GM10248 (cell line): ENCODE measurements at regions of chr3 and their contacts with region 1.

Region 1: GRCh38 chr3:33131331-33132018 is 17.7 kb downstream of the CRTAP start:
- DNase-seq: peak; percentile 76
- CTCF ChIP-seq: peak; percentile 65

Region 2: DNA sequence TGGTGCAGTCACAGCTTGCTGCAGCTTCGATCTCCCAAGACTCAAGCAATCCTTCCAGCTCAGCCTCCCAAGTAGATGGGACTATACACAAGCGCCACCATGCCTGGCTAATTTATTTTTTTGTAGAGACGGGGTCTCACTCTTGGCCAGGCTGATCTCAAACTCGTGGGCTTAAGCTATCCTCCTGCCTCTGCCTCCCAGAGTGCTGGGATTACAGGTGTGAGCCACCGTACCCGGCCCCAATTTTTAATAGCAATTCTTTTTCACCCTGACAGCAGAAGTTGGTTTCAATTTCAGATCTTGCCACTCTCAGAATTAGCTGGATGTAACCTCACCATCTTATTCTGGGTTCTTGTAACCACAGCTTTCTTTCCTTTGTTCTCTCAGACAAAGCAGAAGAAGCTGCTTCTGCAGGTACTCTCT is 248.9 kb before region 1 on chr3:
- CTCF ChIA-PET with region 1: no interaction called
- POLR2A ChIA-PET with region 1: no interaction called
- DNase-seq: peak; percentile 45
- CTCF ChIP-seq: no peak

Region 3: DNA sequence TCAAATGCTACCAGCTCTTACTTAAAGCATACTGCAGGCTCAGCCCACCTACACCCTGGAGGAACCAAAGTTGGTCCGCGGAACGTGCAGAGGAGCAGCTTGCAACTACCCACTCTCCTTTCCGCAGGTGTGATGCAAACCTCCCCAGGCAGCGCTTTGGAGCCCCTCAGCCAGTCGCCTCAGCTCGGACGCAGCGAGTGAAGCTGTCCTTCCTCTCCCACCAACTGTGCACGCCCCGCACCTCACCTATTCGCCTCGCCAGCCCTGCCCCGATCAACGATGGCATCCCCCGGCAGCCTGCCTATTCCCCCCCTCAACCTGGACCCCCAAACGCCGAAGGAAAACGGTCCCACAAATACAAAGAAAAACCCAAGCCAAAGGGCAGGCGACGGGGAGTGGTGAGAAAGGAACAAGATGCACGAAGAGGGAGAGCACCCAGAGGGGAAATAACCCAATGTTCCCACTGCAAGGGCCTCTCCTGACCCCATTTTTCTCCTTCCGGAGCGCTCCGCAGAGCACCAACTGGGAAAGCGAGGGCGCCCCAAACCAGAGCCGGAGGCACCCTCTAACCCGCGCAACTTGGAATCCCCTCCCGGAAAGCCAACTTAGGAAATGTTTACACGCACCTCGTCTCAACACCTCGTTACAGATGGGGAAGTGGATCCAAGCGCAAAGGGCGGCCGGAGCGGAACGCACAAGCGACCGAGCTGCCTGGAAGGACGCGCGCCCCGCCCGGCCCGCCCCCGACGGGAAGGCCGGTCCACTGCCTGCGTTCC is 35.2 kb before region 1 on chr3:
- CTCF ChIA-PET with region 1: interaction called, 14 read pairs
- POLR2A ChIA-PET with region 1: no interaction called
- DNase-seq: peak; percentile 55
- CTCF ChIP-seq: no peak

Region 4: GRCh38 chr3:33144433-33144832 is 13.0 kb after region 1 on chr3:
- CTCF ChIA-PET with region 1: interaction called, 95 read pairs
- POLR2A ChIA-PET with region 1: no interaction called
- DNase-seq: peak; percentile 43
- CTCF ChIP-seq: peak; percentile 49

Region 5: GRCh38 chr3:33209357-33209756 is 77.9 kb after region 1 on chr3:
- CTCF ChIA-PET with region 1: no interaction called
- POLR2A ChIA-PET with region 1: no interaction called
- DNase-seq: no peak
- CTCF ChIP-seq: no peak

Region 6: DNA sequence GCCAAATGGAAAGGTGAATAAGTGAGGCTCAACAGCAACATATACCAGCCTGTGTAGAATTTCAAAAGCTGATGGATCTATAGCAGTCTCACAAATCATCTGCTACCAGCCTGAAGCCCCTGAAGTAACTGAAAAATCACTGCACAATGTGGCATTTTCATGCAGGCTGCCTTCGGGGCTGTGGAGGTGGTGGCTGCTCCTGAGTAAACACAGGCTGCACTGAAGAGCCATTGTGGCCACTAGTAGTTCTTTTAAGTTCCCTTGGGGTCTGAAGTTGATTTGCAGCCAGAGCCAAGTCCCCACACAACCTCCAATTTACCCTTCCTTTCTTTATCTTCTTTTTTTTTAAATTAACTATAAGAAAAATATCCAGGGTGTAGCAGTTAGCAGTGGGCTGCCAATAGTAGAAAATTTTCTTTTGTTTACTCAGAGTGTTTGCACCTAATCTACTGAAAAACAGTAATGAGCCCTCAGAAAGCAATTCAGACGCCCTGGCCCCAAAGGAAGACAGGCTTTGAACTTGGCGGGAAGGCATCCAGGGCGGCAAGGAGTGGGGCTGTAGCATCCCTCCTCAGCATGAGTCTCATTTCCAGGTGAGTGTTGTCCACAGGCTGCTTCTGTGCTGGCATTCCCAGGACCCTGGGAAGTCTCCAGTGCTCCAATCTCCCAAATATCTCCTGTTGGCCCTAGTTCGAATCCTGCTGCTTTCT is 100.4 kb after region 1 on chr3:
- CTCF ChIA-PET with region 1: no interaction called
- POLR2A ChIA-PET with region 1: no interaction called
- DNase-seq: no peak
- CTCF ChIP-seq: no peak

Region 7: GRCh38 chr3:33372218-33373081 is 241.0 kb after region 1 on chr3:
- CTCF ChIA-PET with region 1: interaction called, 108 read pairs
- POLR2A ChIA-PET with region 1: no interaction called
- DNase-seq: peak; percentile 56
- CTCF ChIP-seq: peak; percentile 85

Region 8: DNA sequence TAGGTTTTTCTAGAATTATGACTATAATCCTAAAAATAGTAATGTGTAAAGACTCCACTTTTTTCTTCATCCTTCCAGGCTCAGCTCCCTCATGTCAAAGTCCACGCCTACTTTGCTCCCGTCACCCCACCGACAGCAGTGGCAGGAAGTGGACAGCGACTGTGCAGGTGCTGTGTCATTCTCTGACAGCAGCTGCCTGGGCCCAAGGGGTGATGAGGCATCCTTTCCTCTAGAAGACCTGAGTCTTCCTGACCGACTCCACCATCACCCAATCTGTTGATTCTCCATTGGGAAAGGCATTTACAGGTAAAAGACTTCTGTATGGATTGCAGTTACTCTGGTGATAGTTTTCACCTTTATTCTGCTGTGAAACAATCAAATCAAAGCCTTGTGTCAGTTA is 253.9 kb after region 1 on chr3:
- CTCF ChIA-PET with region 1: interaction called, 11 read pairs
- POLR2A ChIA-PET with region 1: no interaction called
- DNase-seq: no peak
- CTCF ChIP-seq: no peak